SK-N-SH (cell line): ENCODE measurements at regions of chr1 and their contacts with region 1.

Region 1: DNA sequence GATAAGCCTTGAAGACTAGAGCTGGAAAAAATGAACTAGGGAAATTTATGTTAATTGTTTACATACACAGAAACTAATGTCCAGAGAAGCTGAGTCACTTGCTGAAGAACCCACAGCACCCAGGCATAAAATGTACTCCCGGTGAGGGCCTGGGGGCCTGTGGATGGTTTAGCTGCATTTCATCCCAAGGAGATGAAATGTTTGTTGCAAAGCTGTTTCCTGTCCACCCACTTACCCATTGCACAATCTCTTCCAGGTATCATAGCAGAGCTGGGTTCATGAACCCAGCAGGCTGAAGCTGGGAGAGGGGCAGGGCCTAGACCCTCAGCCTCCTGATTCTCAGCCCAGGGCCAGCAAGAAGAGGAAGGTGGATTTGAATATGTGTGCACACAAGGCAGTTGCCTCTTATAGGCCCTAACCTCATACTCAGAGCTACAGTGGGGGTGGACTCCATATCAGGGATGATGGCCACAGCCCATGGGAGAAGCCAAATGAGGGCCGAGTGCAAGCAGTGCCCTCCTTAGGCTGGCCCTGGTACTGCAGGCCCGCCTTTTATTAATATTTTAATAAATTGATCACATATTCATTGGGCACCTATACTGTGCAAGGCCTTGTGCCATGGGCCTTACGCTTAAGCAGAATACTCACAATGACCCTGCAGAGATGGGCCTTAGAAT is 110.8 kb downstream of the LACTBL1 start:
- DNase-seq: peak; percentile 86
- H3K4me3 ChIP-seq: no peak overlapping the region; a peak in 1 of 4 replicates
- H3K27ac ChIP-seq: peak overlapping the region; percentile 31 to 45; a peak in 3 of 4 replicates
- H3K4me1 ChIP-seq: peaks cover 4 to 9% of the 10 kb centered on the region in 2 experiments; a peak in 3 of 4 replicates
- H3K27me3 ChIP-seq: no peaks in the 10 kb centered on the region
- CTCF ChIP-seq: peak; percentile 98
- EP300 ChIP-seq: no peak
- RAD21 ChIP-seq: peak; percentile 88

Region 2: GRCh38 chr1:22472601-22473000 is 389.3 kb before region 1 on chr1:
- CTCF ChIA-PET with region 1: no interaction called
- POLR2A ChIA-PET with region 1: no interaction called
- DNase-seq: no peak
- H3K4me3 ChIP-seq: no peak overlapping the region
- H3K27ac ChIP-seq: 0 out of 4 replicates have a peak overlapping the region, but pooled peaks of 1 of the 2 experiments have one; percentile 3
- H3K4me1 ChIP-seq: peaks cover 5 to 31% of the 10 kb centered on the region in 2 experiments; a peak in 2 of 4 replicates
- H3K27me3 ChIP-seq: no peaks in the 10 kb centered on the region
- CTCF ChIP-seq: no peak
- EP300 ChIP-seq: no peak
- RAD21 ChIP-seq: no peak

Region 3: GRCh38 chr1:22665752-22666151 is 196.2 kb before region 1 on chr1:
- CTCF ChIA-PET with region 1: interaction called, 11 read pairs
- POLR2A ChIA-PET with region 1: no interaction called
- DNase-seq: peak; percentile 77
- H3K4me3 ChIP-seq: no peak overlapping the region; a peak in 1 of 4 replicates
- H3K27ac ChIP-seq: no peak overlapping the region
- H3K4me1 ChIP-seq: no peaks in the 10 kb centered on the region
- H3K27me3 ChIP-seq: peaks cover 20% of the 10 kb centered on the region; the same call in 1 of the 2 replicates
- CTCF ChIP-seq: peak; percentile 69
- EP300 ChIP-seq: no peak
- RAD21 ChIP-seq: peak; percentile 87

Region 4: DNA sequence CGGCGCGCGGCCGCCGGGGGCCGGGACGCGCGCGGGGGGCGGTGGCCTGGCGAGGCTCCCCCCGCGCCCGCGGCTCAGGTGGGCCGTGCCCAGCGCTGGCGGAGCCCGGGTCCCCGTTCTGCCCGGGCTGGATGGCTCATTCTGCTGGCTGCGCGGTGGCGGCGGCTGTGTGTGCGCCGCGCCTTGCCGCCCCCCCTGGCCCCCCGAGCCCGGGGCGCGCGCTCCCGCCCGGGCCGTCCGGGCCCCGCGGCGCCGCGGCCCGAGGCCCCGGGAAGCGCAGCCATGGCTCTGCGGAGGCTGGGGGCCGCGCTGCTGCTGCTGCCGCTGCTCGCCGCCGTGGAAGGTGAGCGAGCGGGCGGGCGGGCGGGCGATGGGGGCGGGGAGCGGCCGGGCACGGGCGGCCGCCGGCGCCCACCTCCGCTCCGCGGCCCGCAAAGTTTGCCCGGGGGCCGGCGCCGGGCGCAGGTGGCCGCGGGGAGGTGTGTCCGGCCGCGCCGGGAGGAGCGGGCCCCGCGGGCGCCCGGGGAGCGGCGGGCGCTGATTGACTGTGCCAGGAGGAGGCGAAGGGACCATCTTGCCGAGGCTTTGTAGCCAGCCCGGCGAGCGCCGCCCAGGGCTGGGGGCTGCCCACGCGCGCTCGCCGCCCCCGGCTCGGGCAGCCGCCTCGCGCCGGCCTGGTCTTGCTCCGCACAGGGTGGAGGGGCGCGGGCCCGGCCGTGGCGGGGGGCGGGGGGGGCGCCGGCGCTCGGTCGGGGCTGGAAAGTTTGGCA is 151.0 kb before region 1 on chr1 and contains the start of gene EPHB2:
- CTCF ChIA-PET with region 1: interaction called, 166 read pairs
- POLR2A ChIA-PET with region 1: no interaction called
- DNase-seq: peak; percentile 96
- H3K4me3 ChIP-seq: peak within 1 kb of the TSS; percentile 69 to 73
- H3K27ac ChIP-seq: peak within 1 kb of the TSS in 1 of 2 experiments; percentile 91; a peak in 2 of 4 replicates
- H3K4me1 ChIP-seq: peaks cover 0 to 30% of the 10 kb centered on the region in 2 experiments; a peak in 1 of 4 replicates
- H3K27me3 ChIP-seq: no peaks in the 10 kb centered on the region
- CTCF ChIP-seq: no peak
- EP300 ChIP-seq: no peak
- RAD21 ChIP-seq: no peak
- polyA plus RNA-seq, gene EPHB2: 18.6 and 25.2 TPM in 2 replicates

Region 5: DNA sequence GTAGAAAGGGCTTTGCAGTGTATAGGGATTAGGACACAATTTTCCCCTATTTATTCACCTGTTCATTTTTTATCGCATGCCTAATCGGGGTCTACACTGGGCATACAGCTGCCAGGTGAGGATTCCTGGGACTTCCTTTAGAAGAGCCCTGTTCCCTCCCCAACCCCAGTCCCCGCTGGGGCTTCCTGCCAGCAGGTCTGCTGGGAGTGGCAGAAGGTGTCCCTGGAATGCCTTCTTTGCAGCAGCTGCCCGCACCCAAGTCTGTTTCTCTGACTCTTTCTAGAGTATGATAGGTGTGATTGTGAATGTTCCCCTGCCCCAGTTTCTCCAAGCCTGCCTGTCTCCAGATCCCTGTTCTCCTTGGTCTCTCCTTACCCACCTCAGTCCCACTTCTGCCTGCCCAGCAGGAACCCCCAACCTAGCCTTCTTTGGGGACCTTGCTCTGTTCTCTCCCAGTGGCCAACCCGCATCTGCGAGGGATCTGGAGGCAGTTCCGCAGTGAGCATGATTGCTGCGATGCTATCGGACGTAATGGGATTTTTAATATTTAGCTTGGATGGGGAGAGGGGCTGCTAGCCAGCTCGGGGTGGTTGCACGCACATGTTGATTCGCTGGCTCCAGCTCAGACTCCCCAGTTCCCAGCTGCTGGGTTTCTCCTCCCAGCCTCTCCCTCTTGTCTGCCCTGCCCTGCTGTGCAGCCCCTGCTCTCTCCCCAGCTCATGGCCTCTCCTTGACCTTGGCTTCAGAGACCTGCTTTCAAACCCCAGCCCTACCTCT is 71.5 kb before region 1 on chr1:
- CTCF ChIA-PET with region 1: interaction called, 16 read pairs
- POLR2A ChIA-PET with region 1: no interaction called
- DNase-seq: peak; percentile 90
- H3K4me3 ChIP-seq: no peak overlapping the region
- H3K27ac ChIP-seq: peak overlapping the region in 1 of 2 experiments; percentile 85; a peak in 2 of 4 replicates
- H3K4me1 ChIP-seq: peaks cover 0 to 53% of the 10 kb centered on the region in 2 experiments; a peak in 2 of 4 replicates
- H3K27me3 ChIP-seq: no peaks in the 10 kb centered on the region
- CTCF ChIP-seq: no peak
- EP300 ChIP-seq: peak in 1 of 2 experiments; percentile 87; a peak in 2 of 4 replicates
- RAD21 ChIP-seq: peak; percentile 25; the same call in 1 of the 2 replicates

Region 6: GRCh38 chr1:22836850-22837249 is 25.1 kb before region 1 on chr1:
- CTCF ChIA-PET with region 1: interaction called, 10 read pairs
- POLR2A ChIA-PET with region 1: no interaction called
- DNase-seq: no peak
- H3K4me3 ChIP-seq: no peak overlapping the region
- H3K27ac ChIP-seq: no peak overlapping the region
- H3K4me1 ChIP-seq: peaks cover 3 to 7% of the 10 kb centered on the region in 2 experiments; a peak in 3 of 4 replicates
- H3K27me3 ChIP-seq: no peaks in the 10 kb centered on the region
- CTCF ChIP-seq: no peak
- EP300 ChIP-seq: no peak
- RAD21 ChIP-seq: no peak

Region 7: DNA sequence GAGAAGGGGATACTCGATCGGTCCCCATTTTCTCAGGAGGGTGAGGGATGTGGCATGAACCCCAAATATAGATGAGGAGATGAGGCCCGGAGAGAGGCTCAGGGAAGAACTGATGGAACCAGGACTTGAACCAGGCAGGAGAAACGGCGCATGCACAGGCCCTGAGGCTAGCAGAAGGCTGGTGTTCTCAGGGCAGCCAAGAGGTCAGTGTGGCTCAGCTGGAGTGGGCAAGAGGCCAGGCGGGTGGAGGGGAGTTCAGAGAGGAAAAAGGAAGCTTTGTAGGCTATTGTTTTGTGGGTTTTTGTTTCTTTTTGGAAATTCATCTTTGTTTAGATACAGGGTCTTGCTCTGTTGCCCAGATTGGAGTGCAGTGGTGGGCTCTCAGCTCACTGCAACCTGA is 11.2 kb before region 1 on chr1:
- CTCF ChIA-PET with region 1: interaction called, 67 read pairs
- POLR2A ChIA-PET with region 1: interaction called, 3 read pairs
- DNase-seq: peak; percentile 67
- H3K4me3 ChIP-seq: no peak overlapping the region
- H3K27ac ChIP-seq: peak overlapping the region in 1 of 2 experiments; percentile 35; a peak in 2 of 4 replicates
- H3K4me1 ChIP-seq: peaks cover 0 to 17% of the 10 kb centered on the region in 2 experiments; a peak in 1 of 4 replicates
- H3K27me3 ChIP-seq: no peaks in the 10 kb centered on the region
- CTCF ChIP-seq: no peak
- EP300 ChIP-seq: no peak
- RAD21 ChIP-seq: no peak

Region 8: GRCh38 chr1:22889213-22889827 is 27.4 kb after region 1 on chr1:
- CTCF ChIA-PET with region 1: interaction called, 15 read pairs
- POLR2A ChIA-PET with region 1: no interaction called
- DNase-seq: peak; percentile 75
- H3K4me3 ChIP-seq: no peak overlapping the region
- H3K27ac ChIP-seq: peak overlapping the region in 1 of 2 experiments; percentile 29; a peak in 1 of 4 replicates
- H3K4me1 ChIP-seq: peaks cover 0 to 9% of the 10 kb centered on the region in 2 experiments; a peak in 1 of 4 replicates
- H3K27me3 ChIP-seq: no peaks in the 10 kb centered on the region
- CTCF ChIP-seq: peak; percentile 84
- EP300 ChIP-seq: no peak
- RAD21 ChIP-seq: peak; percentile 85

Region 9: GRCh38 chr1:23118957-23119792 is 257.3 kb after region 1 on chr1:
- CTCF ChIA-PET with region 1: no interaction called
- POLR2A ChIA-PET with region 1: no interaction called
- DNase-seq: no peak
- H3K4me3 ChIP-seq: no peak overlapping the region; a peak in 1 of 4 replicates
- H3K27ac ChIP-seq: peak overlapping the region in 1 of 2 experiments; percentile 16; a peak in 1 of 4 replicates
- H3K4me1 ChIP-seq: peaks cover 6 to 13% of the 10 kb centered on the region in 2 experiments; a peak in 3 of 4 replicates
- H3K27me3 ChIP-seq: no peaks in the 10 kb centered on the region
- CTCF ChIP-seq: no peak
- EP300 ChIP-seq: no peak
- RAD21 ChIP-seq: no peak